Caco-2 (cell line): ENCODE measurements at regions of chr11 and their contacts with region 1.

Region 1: DNA sequence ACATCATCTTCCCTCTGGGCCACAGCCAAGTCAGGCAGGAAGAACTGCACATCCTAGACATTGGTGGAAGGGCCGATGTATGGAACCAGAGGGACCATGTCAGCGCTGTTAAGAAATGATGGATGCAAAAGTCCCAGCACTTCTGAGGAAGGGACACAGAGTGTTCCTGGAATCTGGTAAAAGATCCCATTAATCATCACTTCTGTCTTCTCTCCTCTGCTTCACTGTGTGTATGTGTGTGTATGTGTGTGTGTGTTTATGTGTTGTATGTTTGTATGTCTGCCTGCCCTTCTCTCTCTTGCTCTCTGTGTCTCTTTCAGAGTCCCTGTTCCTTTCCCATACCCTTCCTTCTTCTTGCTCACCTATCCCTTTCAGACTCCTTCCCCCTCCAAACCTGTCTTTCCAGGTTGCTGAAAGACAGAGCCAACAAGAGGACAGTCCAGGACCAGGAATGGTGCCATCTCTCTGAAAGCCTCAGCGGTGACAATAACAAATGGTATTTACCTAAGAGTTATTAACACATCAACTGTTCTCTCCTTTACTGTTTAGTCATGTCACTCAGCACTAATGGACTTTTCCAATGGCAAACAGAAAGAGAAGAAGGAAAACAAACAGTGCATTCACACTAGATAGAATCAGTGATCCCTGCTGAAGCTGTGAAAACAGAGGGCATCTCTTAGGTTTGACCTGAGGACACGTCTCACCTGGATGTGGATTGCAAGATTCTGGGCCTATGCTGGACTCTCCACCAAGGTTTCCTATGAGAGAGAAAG is 47.1 kb downstream of the EHF start:
- DNase-seq: peak; percentile 71 to 75
- H3K4me3 ChIP-seq: no peak overlapping the region
- H3K4me3 Mint-ChIP-seq: no peak overlapping the region
- H3K27ac Mint-ChIP-seq: no peak overlapping the region
- H3K4me1 ChIP-seq: peaks cover 28% of the 10 kb centered on the region
- H3K4me1 Mint-ChIP-seq: peaks cover 29% of the 10 kb centered on the region
- H3K27me3 ChIP-seq: no peaks in the 10 kb centered on the region
- H3K27me3 Mint-ChIP-seq: no peaks in the 10 kb centered on the region
- CTCF ChIP-seq: no peak

Region 2: DNA sequence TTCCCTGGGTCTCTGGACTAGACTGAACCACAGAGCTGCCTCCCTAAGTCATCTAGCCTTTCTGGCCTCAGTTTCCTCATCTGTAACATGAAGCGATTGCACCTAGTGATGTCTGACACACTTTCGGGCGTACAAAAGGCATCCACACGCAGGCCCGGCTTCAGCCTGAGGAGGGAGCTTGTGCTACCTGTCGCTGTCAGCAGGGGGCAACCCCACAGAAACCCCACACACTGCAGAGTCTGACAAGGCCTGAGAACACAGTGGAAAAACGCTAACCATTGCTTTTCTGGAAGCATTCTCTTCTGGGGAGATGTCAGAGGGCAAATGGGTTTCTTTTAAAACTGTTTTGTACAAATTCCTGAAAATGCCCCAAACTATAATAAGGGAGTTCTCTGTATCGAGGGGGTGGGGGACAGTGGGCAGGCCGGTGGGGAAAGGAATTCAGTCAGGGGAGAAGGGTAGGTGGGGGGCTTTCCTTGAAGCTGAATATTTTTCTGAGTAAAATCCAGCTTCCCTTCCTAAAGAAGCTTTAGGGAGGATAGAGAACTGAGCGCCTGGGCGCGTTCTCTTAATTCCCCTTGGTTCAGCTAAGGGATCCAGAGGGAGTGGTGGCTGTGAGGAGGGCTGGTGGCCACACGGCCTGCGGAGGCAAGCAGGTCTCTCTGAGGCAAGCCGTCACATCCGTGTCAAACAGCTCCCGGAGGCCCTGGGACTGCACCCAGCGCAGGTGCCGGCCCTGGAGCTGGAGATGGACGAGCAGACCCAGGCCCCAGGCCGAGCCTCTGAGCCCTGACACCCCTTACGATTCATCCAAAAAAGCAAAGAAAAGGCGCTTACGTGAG is 154.9 kb before region 1 on chr11:
- CTCF ChIA-PET with region 1: no interaction called
- POLR2A ChIA-PET with region 1: no interaction called
- intact Hi-C with region 1: loop called (anchors 5 kb)
- DNase-seq: peak; percentile 67 to 75
- H3K4me3 ChIP-seq: no peak overlapping the region
- H3K4me3 Mint-ChIP-seq: peak overlapping the region; percentile 9
- H3K27ac Mint-ChIP-seq: no peak overlapping the region
- H3K4me1 ChIP-seq: peaks cover 17% of the 10 kb centered on the region
- H3K4me1 Mint-ChIP-seq: peaks cover 11% of the 10 kb centered on the region
- H3K27me3 ChIP-seq: no peaks in the 10 kb centered on the region
- H3K27me3 Mint-ChIP-seq: peaks cover 1% of the 10 kb centered on the region
- CTCF ChIP-seq: peak; percentile 78 to 92

Region 3: DNA sequence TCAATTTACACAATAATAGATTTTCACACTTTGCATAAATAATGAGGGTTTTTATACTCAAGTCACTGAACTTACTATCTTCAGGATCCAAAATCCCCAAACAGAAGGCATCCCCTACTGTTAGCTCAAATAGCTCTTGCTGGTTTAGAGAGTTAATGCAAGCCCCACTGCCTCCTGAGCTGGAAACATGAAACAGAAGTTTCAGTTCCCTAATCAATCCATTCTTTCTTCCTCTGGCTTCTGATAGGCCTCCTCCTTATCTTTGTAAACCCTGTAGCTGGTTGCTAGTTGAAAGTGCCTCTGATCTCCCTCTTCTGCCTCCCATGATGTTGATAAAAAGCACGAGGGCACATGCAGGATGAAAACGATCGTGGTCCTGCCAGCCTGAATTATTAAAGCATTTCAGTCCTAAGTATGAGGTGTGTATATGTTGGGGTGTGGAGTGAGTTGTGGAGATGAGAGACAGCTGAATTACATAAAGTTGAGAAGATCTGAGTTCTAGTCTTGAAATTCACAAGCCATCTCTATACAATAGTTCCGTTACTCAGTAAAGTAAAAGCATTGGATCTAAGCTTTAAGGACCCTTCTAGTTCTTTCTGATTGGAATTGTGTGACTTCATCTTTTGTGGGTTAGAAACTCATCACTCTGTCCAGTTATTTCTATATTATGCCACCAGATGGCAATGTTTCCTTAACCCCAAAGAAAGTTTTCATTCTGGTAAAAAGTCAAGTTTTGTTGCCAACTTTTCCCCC is 82.1 kb before region 1 on chr11:
- CTCF ChIA-PET with region 1: no interaction called
- POLR2A ChIA-PET with region 1: no interaction called
- intact Hi-C with region 1: loop called (anchors 5 kb)
- DNase-seq: peak in 1 of 2 experiments; percentile 55
- H3K4me3 ChIP-seq: no peak overlapping the region
- H3K4me3 Mint-ChIP-seq: peak overlapping the region; percentile 39
- H3K27ac Mint-ChIP-seq: peak overlapping the region; percentile 61
- H3K4me1 ChIP-seq: peaks cover 28% of the 10 kb centered on the region
- H3K4me1 Mint-ChIP-seq: peaks cover 30% of the 10 kb centered on the region
- H3K27me3 ChIP-seq: 0 out of 2 replicates have a peak, but pooled peaks cover 1% of the 10 kb centered on the region
- H3K27me3 Mint-ChIP-seq: no peaks in the 10 kb centered on the region
- CTCF ChIP-seq: peak; percentile 37 to 81

Region 4: GRCh38 chr11:34600339-34601084 is 67.5 kb before region 1 on chr11:
- CTCF ChIA-PET with region 1: no interaction called
- POLR2A ChIA-PET with region 1: no interaction called
- intact Hi-C with region 1: loop called (anchors 1 kb)
- DNase-seq: peak; percentile 86 to 95
- H3K4me3 ChIP-seq: 0 out of 2 replicates have a peak overlapping the region, but pooled peaks have one; percentile 6
- H3K4me3 Mint-ChIP-seq: peak overlapping the region; percentile 71
- H3K27ac Mint-ChIP-seq: peak overlapping the region; percentile 91
- H3K4me1 ChIP-seq: peaks cover 59% of the 10 kb centered on the region
- H3K4me1 Mint-ChIP-seq: peaks cover 40% of the 10 kb centered on the region
- H3K27me3 ChIP-seq: no peaks in the 10 kb centered on the region
- H3K27me3 Mint-ChIP-seq: no peaks in the 10 kb centered on the region
- CTCF ChIP-seq: no peak

Region 5: DNA sequence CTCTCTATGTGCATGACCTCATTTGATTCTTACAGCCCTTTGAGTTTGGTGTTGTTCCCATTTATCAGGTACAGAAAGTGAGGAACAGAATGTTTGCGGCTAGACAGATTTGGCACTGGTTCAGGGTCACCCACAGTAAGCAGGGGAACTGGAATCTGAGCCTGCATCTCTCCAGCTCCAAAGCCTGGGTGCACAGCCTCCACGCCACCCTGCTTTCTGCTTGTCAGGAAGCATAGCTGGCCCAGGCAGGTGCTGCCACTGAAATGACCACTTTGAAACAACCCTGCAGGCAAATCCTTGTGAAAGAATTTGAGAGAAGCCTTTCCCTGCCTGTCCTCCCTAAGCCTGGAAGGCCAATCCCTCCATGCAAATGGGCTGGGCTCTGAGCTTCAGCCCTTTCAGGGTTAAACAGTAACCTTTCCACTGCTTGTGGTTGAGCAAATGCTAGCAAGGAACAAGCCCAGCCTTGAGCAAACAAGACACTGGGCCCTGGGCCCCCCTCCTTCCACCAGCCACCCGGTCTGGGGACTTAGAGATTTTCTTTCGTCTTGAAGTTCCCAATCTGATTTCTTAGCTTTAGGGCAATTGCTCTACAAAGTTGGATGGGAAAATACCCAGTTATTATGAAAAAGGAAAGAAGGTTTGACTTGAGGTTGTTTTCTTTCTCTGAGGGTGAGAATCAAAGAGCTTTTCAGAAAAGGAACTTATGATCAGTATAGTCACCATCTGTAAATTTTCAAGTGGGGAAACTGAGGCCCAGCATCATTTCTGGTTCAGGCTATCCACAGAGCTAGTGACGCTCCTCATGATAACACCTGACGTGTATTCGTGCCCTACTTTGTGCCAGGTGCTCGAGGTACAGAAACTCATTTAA is 27.7 kb before region 1 on chr11:
- CTCF ChIA-PET with region 1: no interaction called
- POLR2A ChIA-PET with region 1: no interaction called
- intact Hi-C with region 1: loop called (anchors 1 kb)
- DNase-seq: peak; percentile 91 to 96
- H3K4me3 ChIP-seq: no peak overlapping the region
- H3K4me3 Mint-ChIP-seq: peak overlapping the region; percentile 55
- H3K27ac Mint-ChIP-seq: peak overlapping the region; percentile 66
- H3K4me1 ChIP-seq: peaks cover 58% of the 10 kb centered on the region
- H3K4me1 Mint-ChIP-seq: peaks cover 62% of the 10 kb centered on the region
- H3K27me3 ChIP-seq: no peaks in the 10 kb centered on the region
- H3K27me3 Mint-ChIP-seq: no peaks in the 10 kb centered on the region
- CTCF ChIP-seq: no peak

Region 6: GRCh38 chr11:34696862-34697261 is 28.9 kb after region 1 on chr11:
- CTCF ChIA-PET with region 1: no interaction called
- POLR2A ChIA-PET with region 1: no interaction called
- intact Hi-C with region 1: no loop called
- DNase-seq: no peak
- H3K4me3 ChIP-seq: no peak overlapping the region
- H3K4me3 Mint-ChIP-seq: no peak overlapping the region
- H3K27ac Mint-ChIP-seq: no peak overlapping the region
- H3K4me1 ChIP-seq: no peaks in the 10 kb centered on the region
- H3K4me1 Mint-ChIP-seq: no peaks in the 10 kb centered on the region
- H3K27me3 ChIP-seq: no peaks in the 10 kb centered on the region
- H3K27me3 Mint-ChIP-seq: no peaks in the 10 kb centered on the region
- CTCF ChIP-seq: no peak

Region 7: GRCh38 chr11:34732831-34733230 is 64.8 kb after region 1 on chr11:
- CTCF ChIA-PET with region 1: no interaction called
- POLR2A ChIA-PET with region 1: no interaction called
- intact Hi-C with region 1: loop called (anchors 5 kb)
- DNase-seq: peak in 1 of 2 experiments; percentile 5
- H3K4me3 ChIP-seq: no peak overlapping the region
- H3K4me3 Mint-ChIP-seq: no peak overlapping the region
- H3K27ac Mint-ChIP-seq: no peak overlapping the region
- H3K4me1 ChIP-seq: no peaks in the 10 kb centered on the region
- H3K4me1 Mint-ChIP-seq: peaks cover 6% of the 10 kb centered on the region
- H3K27me3 ChIP-seq: no peaks in the 10 kb centered on the region
- H3K27me3 Mint-ChIP-seq: no peaks in the 10 kb centered on the region
- CTCF ChIP-seq: peak in 1 of 2 experiments; percentile 18

Region 8: DNA sequence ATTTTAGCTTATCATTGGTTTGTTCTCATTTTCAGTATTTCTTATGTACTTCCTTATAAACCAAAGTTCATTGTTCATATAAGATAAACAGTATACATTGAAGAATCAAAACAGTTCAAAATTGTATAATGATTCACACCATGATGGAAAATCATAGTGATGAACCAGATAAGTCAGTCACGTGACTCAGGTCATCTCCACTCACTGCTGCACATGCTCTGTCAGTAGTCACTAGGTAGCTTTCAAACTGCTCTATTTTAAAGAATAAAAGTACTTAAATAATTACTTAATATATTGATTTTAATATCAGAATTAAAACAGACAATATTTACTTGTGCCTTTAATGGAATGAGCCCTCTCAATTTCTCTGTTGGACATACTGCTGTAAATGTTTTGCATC is 286.0 kb after region 1 on chr11:
- CTCF ChIA-PET with region 1: no interaction called
- POLR2A ChIA-PET with region 1: no interaction called
- intact Hi-C with region 1: no loop called
- DNase-seq: no peak
- H3K4me3 ChIP-seq: no peak overlapping the region
- H3K4me3 Mint-ChIP-seq: no peak overlapping the region
- H3K27ac Mint-ChIP-seq: no peak overlapping the region
- H3K4me1 ChIP-seq: no peaks in the 10 kb centered on the region
- H3K4me1 Mint-ChIP-seq: no peaks in the 10 kb centered on the region
- H3K27me3 ChIP-seq: no peaks in the 10 kb centered on the region
- H3K27me3 Mint-ChIP-seq: no peaks in the 10 kb centered on the region
- CTCF ChIP-seq: no peak